ENCODE measurements at regions of chr2 and their contacts with region 1.

Region 1: DNA sequence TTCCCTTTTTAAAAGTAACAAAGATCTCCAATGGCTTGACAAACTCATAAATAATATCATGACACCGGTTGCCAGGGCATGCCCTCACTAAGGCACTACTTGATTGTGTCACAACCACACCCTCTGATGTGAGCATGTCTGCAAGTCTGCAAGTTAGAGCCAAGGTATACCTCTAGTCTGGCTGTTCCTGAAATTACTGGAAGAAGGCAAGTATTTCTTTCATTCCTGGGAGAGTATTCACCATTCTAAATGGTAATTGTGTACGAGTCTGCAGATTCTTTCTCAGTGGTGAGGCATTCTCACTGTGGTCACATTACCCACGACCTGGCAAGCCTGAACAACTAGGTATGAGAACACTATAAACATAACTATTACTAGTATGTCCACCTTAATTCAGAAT is 25.7 kb upstream of the RNU4ATAC start:
- DNase-seq: peak; percentile 86
- H3K4me3 Mint-ChIP-seq: peak overlapping the region; percentile 62
- H3K27ac Mint-ChIP-seq: peak overlapping the region; percentile 72
- H3K4me1 Mint-ChIP-seq: peaks cover 61% of the 10 kb centered on the region
- H3K27me3 Mint-ChIP-seq: no peaks in the 10 kb centered on the region
- CTCF ChIP-seq: no peak

Region 2: DNA sequence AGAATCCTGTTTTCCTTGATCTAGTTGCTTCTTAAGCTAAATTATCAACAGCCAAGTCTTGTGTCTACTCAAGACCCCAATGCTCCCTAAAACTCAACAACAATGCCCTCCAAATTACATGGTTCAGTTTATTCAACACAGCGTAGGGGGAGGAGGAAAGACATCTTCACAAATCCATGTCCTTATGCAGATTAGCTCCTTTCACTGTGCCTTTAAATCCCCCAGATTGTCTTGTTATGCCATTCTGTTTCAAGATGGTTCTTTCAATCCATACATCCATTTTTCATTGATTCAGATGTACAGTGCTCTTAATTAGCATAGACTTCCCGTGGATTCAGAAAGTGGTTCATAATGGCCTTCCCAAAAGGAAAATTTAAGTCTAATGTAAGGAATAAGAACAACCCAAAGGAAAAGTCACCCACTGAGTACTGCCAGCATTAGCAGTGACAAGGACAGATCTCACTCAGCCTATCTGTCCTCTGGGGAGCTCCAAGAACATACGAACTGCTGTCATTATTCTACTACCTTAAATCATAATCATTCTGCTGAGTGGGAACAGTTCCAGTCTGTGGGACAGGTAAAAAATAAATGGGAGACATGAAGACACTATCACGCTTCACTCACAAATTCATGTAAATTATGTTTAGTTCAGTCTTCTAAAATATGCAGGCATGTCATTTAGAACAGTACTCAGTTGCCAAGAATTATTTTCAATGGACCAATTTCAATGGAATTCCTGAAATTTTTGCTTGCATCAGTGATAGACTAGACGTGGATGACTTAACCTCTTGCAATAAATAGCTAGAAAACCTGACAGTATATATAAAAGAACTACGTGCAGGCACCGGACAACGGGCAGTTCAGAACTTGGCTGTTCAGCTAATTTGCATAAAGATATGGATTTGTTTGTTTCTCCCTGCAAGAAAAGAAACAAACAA is 33.2 kb before region 1 on chr2:
- CTCF ChIA-PET with region 1: interaction called, 3 read pairs
- POLR2A ChIA-PET with region 1: interaction called, 20 read pairs
- intact Hi-C with region 1: loop called (anchors 1 kb)
- DNase-seq: peak; percentile 22
- H3K4me3 Mint-ChIP-seq: no peak overlapping the region
- H3K27ac Mint-ChIP-seq: peak overlapping the region; percentile 42
- H3K4me1 Mint-ChIP-seq: peaks cover 34% of the 10 kb centered on the region
- H3K27me3 Mint-ChIP-seq: no peaks in the 10 kb centered on the region
- CTCF ChIP-seq: no peak

Region 3: GRCh38 chr2:121479882-121480522 is 25.0 kb before region 1 on chr2:
- CTCF ChIA-PET with region 1: interaction called, 10 read pairs
- POLR2A ChIA-PET with region 1: interaction called, 23 read pairs
- intact Hi-C with region 1: loop called (anchors 1 kb)
- DNase-seq: peak; percentile 82
- H3K4me3 Mint-ChIP-seq: peak overlapping the region; percentile 49
- H3K27ac Mint-ChIP-seq: peak overlapping the region; percentile 24
- H3K4me1 Mint-ChIP-seq: peaks cover 46% of the 10 kb centered on the region
- H3K27me3 Mint-ChIP-seq: no peaks in the 10 kb centered on the region
- CTCF ChIP-seq: peak; percentile 28

Region 4: DNA sequence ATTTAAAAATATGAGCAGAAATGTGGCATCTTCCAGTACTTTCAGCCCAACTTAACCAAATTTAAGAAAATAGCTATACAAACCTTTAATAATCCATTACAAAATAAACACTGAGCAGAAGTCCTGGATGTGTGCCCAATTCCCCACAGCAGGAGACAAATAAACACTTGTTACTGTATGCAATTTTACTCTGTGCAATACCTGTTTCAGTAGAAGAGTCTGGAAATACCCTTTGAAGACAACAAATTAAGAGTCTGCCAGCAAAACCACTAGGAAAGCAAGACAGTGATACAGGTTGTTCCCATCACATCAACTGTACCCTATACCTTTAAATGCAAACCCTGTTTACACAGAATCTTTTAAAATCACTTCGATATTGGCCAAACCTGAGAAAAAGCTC is 15.7 kb before region 1 on chr2:
- CTCF ChIA-PET with region 1: interaction called, 4 read pairs
- POLR2A ChIA-PET with region 1: interaction called, 89 read pairs
- intact Hi-C with region 1: no loop called
- DNase-seq: peak; percentile 92
- H3K4me3 Mint-ChIP-seq: no peak overlapping the region
- H3K27ac Mint-ChIP-seq: no peak overlapping the region
- H3K4me1 Mint-ChIP-seq: peaks cover 27% of the 10 kb centered on the region
- H3K27me3 Mint-ChIP-seq: no peaks in the 10 kb centered on the region
- CTCF ChIP-seq: no peak

Region 5: GRCh38 chr2:121519732-121520640 is 15.0 kb after region 1 on chr2:
- CTCF ChIA-PET with region 1: interaction called, 3 read pairs
- POLR2A ChIA-PET with region 1: interaction called, 247 read pairs
- intact Hi-C with region 1: no loop called
- DNase-seq: no peak
- H3K4me3 Mint-ChIP-seq: no peak overlapping the region
- H3K27ac Mint-ChIP-seq: no peak overlapping the region
- H3K4me1 Mint-ChIP-seq: peaks cover 9% of the 10 kb centered on the region
- H3K27me3 Mint-ChIP-seq: no peaks in the 10 kb centered on the region
- CTCF ChIP-seq: no peak

Region 6: GRCh38 chr2:121640385-121641316 is 135.6 kb after region 1 on chr2:
- CTCF ChIA-PET with region 1: no interaction called
- POLR2A ChIA-PET with region 1: no interaction called
- intact Hi-C with region 1: no loop called
- DNase-seq: no peak
- H3K4me3 Mint-ChIP-seq: no peak overlapping the region
- H3K27ac Mint-ChIP-seq: peak overlapping the region; percentile 66
- H3K4me1 Mint-ChIP-seq: peaks cover 22% of the 10 kb centered on the region
- H3K27me3 Mint-ChIP-seq: no peaks in the 10 kb centered on the region
- CTCF ChIP-seq: no peak

Measured in MCF 10A (cell line).